Kidney (tissue), 22 donors: ENCODE measurements at regions of chr18 and their contacts with region 1.

Region 1: DNA sequence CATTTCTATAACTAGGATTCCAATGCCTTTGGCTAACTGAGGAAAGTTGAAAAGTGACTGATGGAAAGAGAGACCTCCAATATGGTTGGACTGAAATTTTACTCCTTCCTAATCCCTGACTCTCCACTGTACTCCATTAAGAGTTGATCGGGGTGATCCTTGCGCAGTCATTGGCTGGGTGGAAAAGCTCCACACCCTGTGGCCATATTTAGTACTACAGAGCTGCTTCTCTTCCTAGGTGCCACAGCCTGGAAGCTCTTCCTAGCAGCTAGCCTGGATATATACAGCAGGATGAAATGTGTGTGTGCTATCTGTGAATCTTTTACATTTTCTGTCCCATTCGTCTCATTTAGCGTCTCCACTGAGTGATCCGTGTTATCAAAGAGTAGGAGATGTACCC is 71.2 kb downstream of the MEP1B start:
- DNase-seq: no peak
- H3K4me3 ChIP-seq: no peak overlapping the region
- H3K27ac ChIP-seq: no peak overlapping the region
- H3K4me1 ChIP-seq: no peaks in the 10 kb centered on the region
- H3K27me3 ChIP-seq: no peaks in the 10 kb centered on the region
- CTCF ChIP-seq: no peak

Region 2: DNA sequence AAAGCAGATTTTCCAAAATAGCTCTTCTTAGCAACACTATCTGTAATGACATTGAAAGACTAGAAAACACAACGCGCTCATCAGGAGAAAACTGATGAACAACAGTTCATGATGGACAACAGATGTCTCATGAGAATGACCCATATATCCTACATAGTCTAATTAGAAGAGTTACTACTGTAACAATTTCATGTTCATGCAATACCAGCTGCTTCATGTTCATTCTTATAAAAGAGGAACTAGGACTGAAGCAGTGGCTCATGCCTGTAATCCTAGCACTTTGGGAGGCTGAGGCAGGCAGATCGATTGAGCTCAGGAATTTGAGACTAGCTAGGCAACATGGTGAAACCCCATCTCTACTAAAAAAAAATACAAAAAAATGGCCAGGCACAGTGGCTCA is 340.7 kb before region 1 on chr18:
- intact Hi-C with region 1: no loop called
- DNase-seq: no peak
- H3K4me3 ChIP-seq: no peak overlapping the region
- H3K27ac ChIP-seq: no peak overlapping the region
- H3K4me1 ChIP-seq: no peaks in the 10 kb centered on the region
- H3K27me3 ChIP-seq: no peaks in the 10 kb centered on the region
- CTCF ChIP-seq: no peak

Region 3: GRCh38 chr18:32470713-32471633 is 210.0 kb after region 1 on chr18 and contains the start of gene GAREM1:
- intact Hi-C with region 1: loop called (anchors 10 kb)
- DNase-seq: peak; percentile 98 to 99 (median 98)
- H3K4me3 ChIP-seq: peak within 1 kb of the TSS; percentile 87 to 93 (median 92)
- H3K27ac ChIP-seq: peak within 1 kb of the TSS; percentile 79 to 82
- H3K4me1 ChIP-seq: peaks cover 0 to 8% (median 0%) of the 10 kb centered on the region in 3 donors
- H3K27me3 ChIP-seq: no peaks in the 10 kb centered on the region
- CTCF ChIP-seq: peak; percentile 79
- total RNA-seq, gene GAREM1: 47.0 TPM